Dorsolateral prefrontal cortex (tissue), 120 donors: ENCODE measurements at regions of chr7 and their contacts with region 1.

Region 1: DNA sequence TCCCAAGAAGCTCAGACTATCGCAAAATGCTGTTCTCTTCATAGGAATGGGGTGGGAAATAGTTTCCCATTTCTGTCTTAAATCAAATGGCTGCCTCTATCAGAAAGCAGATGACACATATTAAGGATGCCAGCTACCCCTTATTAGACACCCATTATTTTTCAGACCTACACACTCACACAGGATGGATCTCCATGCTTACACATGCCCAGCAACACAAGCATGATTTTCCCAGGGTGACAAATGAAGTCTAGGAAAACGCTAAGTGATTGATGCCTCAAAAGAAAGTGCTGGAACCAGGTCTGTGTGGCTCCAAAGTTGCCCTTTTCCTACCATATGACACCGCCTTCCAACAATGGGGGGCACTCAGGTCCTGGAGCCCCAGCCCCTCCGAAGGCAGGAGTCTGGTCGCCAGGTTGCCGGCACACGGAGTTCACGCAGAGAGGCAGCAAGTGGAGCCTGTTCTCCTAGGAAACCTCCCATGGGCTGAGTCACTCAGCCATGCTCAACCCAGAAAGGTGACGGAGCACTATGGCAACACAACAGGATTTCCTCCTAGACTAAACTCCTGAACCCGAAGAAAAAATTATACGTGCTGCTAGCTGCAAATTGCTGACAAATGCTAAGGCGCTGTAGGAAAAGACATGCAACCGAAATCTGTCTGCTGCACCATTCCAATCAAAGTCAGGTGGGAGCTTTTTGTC is 19.8 kb downstream of the VOPP1 start:
- DNase-seq: peak in 6 of 10 donors; percentile 33 to 66 (median 53)
- H3K4me3 ChIP-seq: peak overlapping the region in 31 of 59 donors; percentile 1 to 46 (median 22)
- H3K27ac ChIP-seq: peak overlapping the region in 44 of 59 donors; percentile 10 to 87 (median 50)
- H3K27me3 ChIP-seq: no peaks in the 10 kb centered on the region
- CTCF ChIP-seq: peak in 1 of 56 donors; percentile 13

Region 2: GRCh38 chr7:55432939-55433784 is 119.3 kb before region 1 on chr7:
- intact Hi-C with region 1: loop called in 1 of 2 experiments (anchors 10 kb)
- DNase-seq: no peak
- H3K4me3 ChIP-seq: no peak overlapping the region
- H3K27ac ChIP-seq: peak overlapping the region in 10 of 59 donors; percentile 20 to 52 (median 35)
- H3K27me3 ChIP-seq: no peaks in the 10 kb centered on the region
- CTCF ChIP-seq: peak in 49 of 56 donors; percentile 13 to 64 (median 43)